ENCODE measurements at regions of chr22 and their contacts with region 1.

Region 1: GRCh38 chr22:19756288-19757128 is 4.1 kb upstream of the TBX1 start:
- DNase-seq: peak; percentile 95 to 99 (median 99)
- ATAC-seq: peak; percentile 87
- H3K4me3 ChIP-seq: peak overlapping the region; percentile 29
- H3K27ac ChIP-seq: no peak overlapping the region
- H3K4me1 ChIP-seq: peaks cover 17 to 82% of the 10 kb centered on the region in 2 experiments; a peak in 4 of 5 replicates
- H3K27me3 ChIP-seq: peaks cover 51 to 78% of the 10 kb centered on the region in 2 experiments; a peak in 4 of 5 replicates
- CTCF ChIP-seq: peak; percentile 98 to 99 (median 98)
- EP300 ChIP-seq: peak; percentile 42; the same call in 1 of the 2 replicates
- POLR2A ChIP-seq: no peak
- RAD21 ChIP-seq: peak in 1 of 2 experiments; percentile 100; a peak in 3 of 4 replicates

Region 2: DNA sequence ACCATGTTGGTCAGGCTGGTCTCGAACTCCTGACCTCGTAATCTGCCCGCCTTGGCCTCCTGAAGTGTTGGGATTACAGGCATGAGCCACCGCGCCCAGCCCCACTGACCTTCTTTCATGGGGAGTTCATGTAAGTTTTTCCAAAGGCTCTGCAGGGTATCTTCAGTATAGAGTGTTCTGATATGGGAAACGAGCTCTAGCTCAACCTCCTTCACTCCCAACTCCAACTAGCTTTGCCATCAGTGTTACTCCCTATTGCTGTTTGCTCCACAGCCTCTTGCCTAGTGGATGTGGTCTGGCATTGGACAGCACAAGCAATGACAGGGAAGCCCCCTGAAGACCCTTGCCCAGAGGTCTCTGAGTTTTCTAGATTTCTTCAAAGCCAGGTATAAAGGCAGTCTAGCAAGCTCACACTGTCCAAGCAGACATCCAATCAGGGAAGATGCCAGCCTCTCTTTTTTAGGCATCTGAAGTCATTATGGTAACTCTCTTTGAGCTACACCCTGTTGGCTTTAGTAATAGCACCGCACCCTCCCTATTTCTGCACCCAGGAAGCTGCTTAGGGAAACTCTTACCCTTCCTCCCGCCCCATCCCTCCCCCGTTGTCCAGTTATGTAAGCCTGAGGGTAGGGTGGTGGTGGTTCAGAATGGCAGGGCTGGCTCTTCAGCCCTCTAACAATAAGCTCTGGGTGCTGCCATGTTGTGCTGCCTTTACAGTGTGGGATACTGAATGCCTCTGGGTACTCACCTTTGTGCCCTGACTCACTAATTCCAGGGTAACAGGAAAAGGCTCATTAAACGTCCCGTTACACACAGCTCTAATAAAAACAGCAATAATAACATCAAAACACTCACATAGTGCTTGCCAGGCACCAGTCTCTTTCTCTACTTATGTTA is 190.9 kb before region 1 on chr22:
- CTCF ChIA-PET with region 1: no interaction called
- POLR2A ChIA-PET with region 1: no interaction called
- in situ Hi-C with region 1: no loop called
- intact Hi-C with region 1: no loop called
- DNase-seq: peak in 2 of 4 experiments; percentile 24 to 40
- ATAC-seq: no peak
- H3K4me3 ChIP-seq: no peak overlapping the region
- H3K27ac ChIP-seq: no peak overlapping the region
- H3K4me1 ChIP-seq: peaks cover 0 to 8% of the 10 kb centered on the region in 2 experiments; a peak in 2 of 5 replicates
- H3K27me3 ChIP-seq: peaks cover 64 to 73% of the 10 kb centered on the region in 2 experiments
- CTCF ChIP-seq: no peak
- EP300 ChIP-seq: no peak
- POLR2A ChIP-seq: no peak
- RAD21 ChIP-seq: no peak

Region 3: GRCh38 chr22:19745155-19746101 is 11.1 kb before region 1 on chr22:
- CTCF ChIA-PET with region 1: interaction called, 3 read pairs
- POLR2A ChIA-PET with region 1: interaction called, 14 read pairs
- in situ Hi-C with region 1: no loop called
- intact Hi-C with region 1: no loop called
- DNase-seq: peak in 1 of 4 experiments; percentile 56
- ATAC-seq: peak; percentile 17
- H3K4me3 ChIP-seq: no peak overlapping the region
- H3K27ac ChIP-seq: no peak overlapping the region
- H3K4me1 ChIP-seq: peaks cover 5 to 68% of the 10 kb centered on the region in 2 experiments
- H3K27me3 ChIP-seq: peaks cover 20 to 61% of the 10 kb centered on the region in 2 experiments; a peak in 4 of 5 replicates
- CTCF ChIP-seq: no peak
- EP300 ChIP-seq: no peak
- POLR2A ChIP-seq: no peak
- RAD21 ChIP-seq: no peak

Region 4: DNA sequence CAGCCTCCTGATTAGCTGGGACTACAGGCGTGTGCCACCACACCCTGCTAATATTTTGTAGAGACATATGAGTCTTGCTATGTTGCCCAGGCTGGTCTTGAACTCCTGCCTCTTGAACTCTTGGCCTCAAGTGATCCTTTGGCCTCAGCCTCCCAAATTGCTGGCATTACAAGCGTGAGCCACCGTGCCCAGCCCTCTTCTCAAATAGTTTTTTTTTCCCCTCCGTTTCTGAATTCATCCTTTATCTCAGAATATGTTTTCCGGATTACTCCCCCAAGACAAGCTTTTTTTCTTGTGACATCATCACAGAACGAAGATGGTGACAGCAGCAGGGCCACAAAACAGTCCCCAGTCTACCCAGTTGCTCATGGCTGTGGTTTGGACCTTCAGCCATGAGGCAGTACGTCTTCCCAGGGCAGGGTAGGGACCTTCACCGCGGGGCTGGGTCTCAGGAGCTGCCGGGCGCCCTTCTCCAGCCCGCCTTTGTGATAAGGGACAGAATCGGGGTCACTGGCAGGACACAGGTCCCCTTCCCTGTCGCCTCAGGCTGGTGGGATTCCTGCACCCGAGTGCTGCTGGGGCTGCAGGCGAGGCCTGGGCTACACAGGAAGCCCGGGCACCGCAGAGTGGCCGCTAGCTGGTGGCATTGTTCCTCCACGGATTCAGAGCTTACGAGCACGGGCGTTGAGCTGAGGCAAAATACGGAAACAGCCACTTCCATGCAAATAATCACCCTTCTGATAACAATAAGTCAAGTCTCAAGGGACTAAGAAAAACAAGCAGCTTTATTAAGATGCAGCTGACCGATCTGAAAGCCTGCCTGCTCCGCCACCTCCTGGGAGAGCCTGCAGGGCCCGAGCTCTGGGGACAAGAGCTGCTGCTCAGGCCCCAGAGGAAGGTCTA is 16.2 kb after region 1 on chr22:
- CTCF ChIA-PET with region 1: interaction called, 9 read pairs
- POLR2A ChIA-PET with region 1: interaction called, 78 read pairs
- in situ Hi-C with region 1: no loop called
- intact Hi-C with region 1: no loop called
- DNase-seq: peak; percentile 65 to 73 (median 69)
- ATAC-seq: peak; percentile 54
- H3K4me3 ChIP-seq: no peak overlapping the region
- H3K27ac ChIP-seq: peak overlapping the region; percentile 11; the same call in 1 of the 3 replicates
- H3K4me1 ChIP-seq: peaks cover 38 to 77% of the 10 kb centered on the region in 2 experiments
- H3K27me3 ChIP-seq: peaks cover 0 to 9% of the 10 kb centered on the region in 2 experiments; a peak in 2 of 5 replicates
- CTCF ChIP-seq: peak in 2 of 3 experiments; percentile 34 to 37; a peak in 2 of 6 replicates
- EP300 ChIP-seq: no peak
- POLR2A ChIP-seq: no peak
- RAD21 ChIP-seq: peak in 1 of 2 experiments; percentile 51; a peak in 2 of 4 replicates

Region 5: DNA sequence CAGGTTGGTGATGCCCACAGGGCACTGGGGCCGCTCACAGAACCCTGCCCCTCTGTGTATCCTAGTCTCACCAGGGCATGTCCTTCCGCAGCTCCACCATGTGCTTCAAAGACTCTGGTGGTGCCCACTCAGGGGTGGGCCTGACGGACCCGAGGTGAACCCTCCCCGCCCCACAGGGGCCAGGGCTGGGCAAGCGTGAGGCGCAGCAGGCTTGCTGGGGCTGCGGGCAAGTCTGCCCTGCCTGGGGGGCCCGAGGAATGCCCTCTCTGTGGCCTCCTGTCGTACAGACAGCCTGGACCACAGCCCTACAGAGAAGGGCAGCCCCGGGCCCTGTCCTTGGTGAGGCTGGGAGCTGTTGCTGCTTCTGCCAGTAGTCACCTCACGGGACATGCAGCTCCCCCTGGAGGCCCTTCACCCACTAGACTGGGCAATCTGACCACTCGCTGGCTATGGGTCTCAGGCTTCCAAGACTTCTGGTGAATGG is 44.3 kb after region 1 on chr22:
- CTCF ChIA-PET with region 1: interaction called, 3 read pairs
- POLR2A ChIA-PET with region 1: interaction called, 3 read pairs
- in situ Hi-C with region 1: no loop called
- intact Hi-C with region 1: loop called (anchors 1 kb)
- DNase-seq: peak in 3 of 4 experiments; percentile 60 to 76 (median 74)
- ATAC-seq: peak; percentile 68
- H3K4me3 ChIP-seq: no peak overlapping the region
- H3K27ac ChIP-seq: no peak overlapping the region
- H3K4me1 ChIP-seq: peaks cover under 1 to 68% of the 10 kb centered on the region in 2 experiments; a peak in 4 of 5 replicates
- H3K27me3 ChIP-seq: no peaks in the 10 kb centered on the region
- CTCF ChIP-seq: peak; percentile 71 to 79 (median 76)
- EP300 ChIP-seq: no peak
- POLR2A ChIP-seq: no peak
- RAD21 ChIP-seq: peak in 1 of 2 experiments; percentile 59; a peak in 2 of 4 replicates

Region 6: DNA sequence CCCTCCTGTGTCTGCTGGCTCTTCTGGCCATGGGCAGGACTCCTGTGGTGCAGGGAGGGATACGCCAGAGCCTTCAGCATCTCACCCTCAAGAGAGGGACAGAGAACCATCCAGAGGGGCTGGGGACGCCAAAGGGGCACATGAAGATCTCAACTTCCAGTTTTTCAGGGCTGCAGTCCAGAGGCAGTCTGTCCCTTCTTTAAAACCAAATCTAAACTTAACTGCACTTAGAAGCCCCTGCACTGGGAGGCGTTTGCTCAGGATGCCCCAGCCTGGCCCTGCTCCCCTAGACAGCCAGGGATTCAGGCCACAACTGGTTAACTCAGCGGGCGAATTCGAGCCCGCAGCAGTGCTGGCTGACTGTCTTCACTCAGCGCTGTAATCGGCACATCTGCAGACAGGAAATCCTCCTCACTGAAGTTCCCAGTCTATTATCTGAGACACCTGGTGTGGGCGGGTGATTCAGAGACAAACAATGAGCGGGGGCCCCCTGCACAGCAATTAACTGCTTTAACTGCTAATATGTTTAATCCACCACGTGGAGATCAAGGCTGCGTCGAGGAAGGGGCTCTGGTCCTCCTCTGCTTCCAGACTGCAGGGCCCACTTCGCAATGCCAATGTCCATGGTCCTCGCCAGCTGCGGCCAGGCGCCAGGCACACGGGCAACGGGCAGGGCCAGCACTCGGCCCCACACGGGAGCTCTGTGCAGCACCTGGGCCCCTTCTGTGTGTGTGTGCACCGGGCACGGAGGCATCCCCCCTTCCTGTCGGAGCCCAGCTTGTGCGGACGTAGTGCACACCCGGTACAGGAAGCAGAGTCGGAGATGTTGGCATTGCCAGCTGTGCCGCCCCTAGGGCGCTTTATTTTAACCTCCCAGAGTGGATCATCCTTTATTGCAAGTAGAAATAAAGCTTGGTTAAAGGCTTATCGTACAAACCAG is 135.1 kb after region 1 on chr22:
- CTCF ChIA-PET with region 1: interaction called, 3 read pairs
- POLR2A ChIA-PET with region 1: interaction called, 7 read pairs
- in situ Hi-C with region 1: no loop called
- intact Hi-C with region 1: loop called (anchors 5 kb)
- DNase-seq: peak; percentile 98 to 99 (median 98)
- ATAC-seq: peak; percentile 92
- H3K4me3 ChIP-seq: no peak overlapping the region
- H3K27ac ChIP-seq: peak overlapping the region; percentile 46; the same call in 2 of the 3 replicates
- H3K4me1 ChIP-seq: peaks cover 24 to 62% of the 10 kb centered on the region in 2 experiments
- H3K27me3 ChIP-seq: no peaks in the 10 kb centered on the region
- CTCF ChIP-seq: peak in 2 of 3 experiments; percentile 9 to 33; a peak in 2 of 6 replicates
- EP300 ChIP-seq: peak; percentile 99
- POLR2A ChIP-seq: no peak; the same call in 1 of the 2 replicates
- RAD21 ChIP-seq: peak in 1 of 2 experiments; percentile 54; a peak in 2 of 4 replicates

Region 7: DNA sequence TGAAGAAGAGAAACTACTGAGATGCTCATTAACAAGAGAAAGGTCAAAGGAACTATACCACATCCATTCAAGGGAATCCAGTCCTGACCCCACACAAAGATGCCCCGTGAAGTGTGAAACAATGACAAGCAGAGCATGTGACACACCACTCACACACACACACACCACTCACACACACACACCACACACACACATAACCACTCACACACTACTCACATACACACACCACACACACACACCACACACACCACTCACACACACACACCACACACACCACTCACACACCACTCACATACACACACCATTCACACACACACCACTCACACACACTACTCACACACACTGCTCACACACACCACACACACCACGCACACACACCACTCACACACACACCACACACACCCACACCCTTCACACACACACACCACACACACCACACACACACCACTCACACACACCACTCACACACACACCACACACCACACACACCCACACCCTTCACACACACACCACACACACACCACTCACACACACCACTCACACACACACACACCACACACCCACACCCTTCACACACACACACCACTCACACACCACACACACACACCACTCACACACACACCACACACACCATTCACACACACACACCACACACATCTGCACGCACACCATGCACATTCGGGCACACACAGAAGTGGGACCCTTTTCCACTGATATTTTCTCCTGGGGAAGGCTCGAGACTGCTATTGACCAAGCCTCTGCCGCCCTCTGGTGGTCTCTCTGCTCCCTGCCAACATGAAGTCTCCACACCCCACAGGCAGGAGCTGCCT is 153.1 kb after region 1 on chr22:
- CTCF ChIA-PET with region 1: interaction called, 91 read pairs
- POLR2A ChIA-PET with region 1: interaction called, 5 read pairs
- in situ Hi-C with region 1: no loop called
- intact Hi-C with region 1: loop called (anchors 1 kb)
- DNase-seq: peak; percentile 97 to 99 (median 98)
- ATAC-seq: peak; percentile 97
- H3K4me3 ChIP-seq: no peak overlapping the region
- H3K27ac ChIP-seq: peak overlapping the region; percentile 16; the same call in 1 of the 3 replicates
- H3K4me1 ChIP-seq: peaks cover 2 to 28% of the 10 kb centered on the region in 2 experiments; a peak in 4 of 5 replicates
- H3K27me3 ChIP-seq: no peaks in the 10 kb centered on the region; a peak in 1 of 5 replicates
- CTCF ChIP-seq: peak; percentile 98 to 100 (median 100)
- EP300 ChIP-seq: peak; percentile 51
- POLR2A ChIP-seq: peak; percentile 25; the same call in 1 of the 2 replicates
- RAD21 ChIP-seq: peak; percentile 100

Region 8: GRCh38 chr22:19948057-19948760 is 191.7 kb after region 1 on chr22:
- CTCF ChIA-PET with region 1: interaction called, 18 read pairs
- POLR2A ChIA-PET with region 1: interaction called, 5 read pairs
- in situ Hi-C with region 1: no loop called
- intact Hi-C with region 1: no loop called
- DNase-seq: no peak
- ATAC-seq: no peak
- H3K4me3 ChIP-seq: no peak overlapping the region
- H3K27ac ChIP-seq: peak overlapping the region; percentile 92; the same call in 2 of the 3 replicates
- H3K4me1 ChIP-seq: peaks cover 28 to 30% of the 10 kb centered on the region in 2 experiments
- H3K27me3 ChIP-seq: no peaks in the 10 kb centered on the region
- CTCF ChIP-seq: no peak
- EP300 ChIP-seq: no peak
- POLR2A ChIP-seq: no peak
- RAD21 ChIP-seq: no peak

Measured in K562 (cell line).